ENCODE measurements at regions of chr11 and their contacts with region 1.

Region 1: DNA sequence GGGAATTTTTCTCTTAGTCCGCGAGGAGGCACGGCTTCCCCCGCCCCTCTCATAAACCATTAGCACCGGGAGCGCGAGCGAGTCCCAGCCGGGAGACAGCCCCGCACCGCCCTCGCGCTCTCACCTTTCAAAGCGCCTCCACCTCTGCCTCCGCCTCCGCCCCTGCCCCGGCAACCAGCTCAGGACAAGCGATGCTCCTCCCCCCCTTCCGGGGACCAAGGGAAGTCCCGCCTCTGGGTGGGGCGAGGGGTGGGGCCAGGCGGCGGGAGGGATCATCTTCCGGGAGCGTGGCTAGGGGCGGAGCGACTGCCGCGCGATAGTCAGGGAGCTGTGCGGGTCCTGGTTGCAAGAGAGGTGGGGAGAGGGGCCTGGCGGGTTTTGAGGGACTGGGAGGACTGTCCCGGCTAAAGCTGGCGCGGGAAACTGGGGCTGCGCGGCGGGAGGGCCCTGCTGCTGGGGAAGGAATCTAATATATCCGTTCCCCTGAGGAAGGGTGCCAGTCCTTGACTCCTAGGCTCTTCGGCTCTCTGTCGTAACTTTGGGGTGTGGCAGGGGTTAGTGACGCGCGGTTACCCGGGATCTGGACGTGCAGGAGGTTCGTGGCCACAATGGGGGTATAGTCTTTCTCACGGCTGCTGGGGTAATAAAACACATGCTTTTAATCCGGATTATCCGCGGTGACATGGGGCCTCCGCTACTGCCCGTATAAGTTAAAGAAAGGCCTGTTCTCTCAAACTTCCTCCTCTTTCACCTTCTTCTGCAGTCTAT is at the starts of genes CCDC82 and JRKL:
- DNase-seq: peak; percentile 96
- ATAC-seq: peak; percentile 99
- H3K4me3 ChIP-seq: peak within 1 kb of the TSS; percentile 77 to 89 (median 84)
- H3K4me3 Mint-ChIP-seq: peak within 1 kb of the TSS; percentile 93
- H3K27ac ChIP-seq: peak within 1 kb of the TSS; percentile 82 to 83
- H3K27ac Mint-ChIP-seq: peak within 1 kb of the TSS; percentile 95
- H3K4me1 ChIP-seq: peaks cover 13 to 18% of the 10 kb centered on the region in 2 donors
- H3K4me1 Mint-ChIP-seq: peaks cover 26% of the 10 kb centered on the region
- H3K27me3 ChIP-seq: no peaks in the 10 kb centered on the region
- H3K27me3 Mint-ChIP-seq: no peaks in the 10 kb centered on the region
- CTCF ChIP-seq: no peak
- total RNA-seq, gene CCDC82: 34.1 and 37.9 TPM in 2 replicates
- total RNA-seq, gene JRKL: 12.5 and 12.9 TPM in 2 replicates

Region 2: DNA sequence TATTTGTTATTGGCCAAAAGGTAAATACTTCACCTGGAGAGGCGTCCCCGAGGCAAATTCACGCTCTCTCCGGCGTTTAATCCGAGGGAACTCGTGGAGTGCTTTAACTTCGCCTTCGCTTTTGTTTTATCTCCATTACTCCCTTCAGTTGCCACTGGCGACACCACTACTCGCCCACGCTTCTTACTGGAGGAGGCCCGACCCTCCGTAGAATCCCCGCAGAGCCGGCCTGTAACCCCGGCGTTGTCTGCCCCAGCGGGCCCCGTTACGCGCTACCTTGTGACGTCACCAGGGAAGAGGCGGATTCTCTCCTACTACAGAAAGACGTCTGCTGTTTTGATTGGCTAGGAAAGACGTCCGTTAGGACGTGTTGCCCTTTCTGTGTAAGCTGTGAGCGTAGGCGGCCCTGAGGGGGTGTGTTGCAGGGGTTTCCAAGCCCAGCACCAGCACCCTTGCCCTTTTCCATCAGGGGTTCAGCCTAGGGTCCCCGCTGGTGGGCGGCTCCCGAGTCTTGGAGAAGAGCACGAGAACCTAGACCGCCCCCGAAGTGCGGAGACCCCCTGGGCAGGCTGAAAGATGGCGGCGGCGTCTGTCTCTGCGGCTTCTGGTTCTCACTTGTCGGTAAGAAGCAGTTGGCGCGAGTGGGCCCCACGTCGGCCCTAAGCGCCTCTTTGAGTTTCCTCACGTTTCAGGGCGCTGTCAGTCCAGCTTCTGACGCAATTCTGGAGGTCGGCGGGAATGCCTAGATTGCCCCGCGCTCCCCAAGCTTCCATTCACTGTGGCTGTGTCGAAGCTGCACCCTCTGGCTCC is 599.6 kb before region 1 on chr11 and contains the start of gene CEP57:
- CTCF ChIA-PET with region 1: interaction called, 4 read pairs
- POLR2A ChIA-PET with region 1: interaction called, 3 read pairs
- intact Hi-C with region 1: loop called (anchors 1 kb)
- DNase-seq: peak; percentile 98
- ATAC-seq: peak; percentile 63
- H3K4me3 ChIP-seq: peak within 1 kb of the TSS; percentile 73 to 99 (median 96)
- H3K4me3 Mint-ChIP-seq: peak within 1 kb of the TSS; percentile 97
- H3K27ac ChIP-seq: peak within 1 kb of the TSS; percentile 98 to 100
- H3K27ac Mint-ChIP-seq: peak within 1 kb of the TSS; percentile 99
- H3K4me1 ChIP-seq: peaks cover 20% of the 10 kb centered on the region in 2 donors
- H3K4me1 Mint-ChIP-seq: peaks cover 51% of the 10 kb centered on the region
- H3K27me3 ChIP-seq: no peaks in the 10 kb centered on the region
- H3K27me3 Mint-ChIP-seq: no peaks in the 10 kb centered on the region
- CTCF ChIP-seq: no peak
- total RNA-seq, gene CEP57: 78.1 and 82.9 TPM in 2 replicates

Region 3: GRCh38 chr11:95849087-95849825 is 540.6 kb before region 1 on chr11:
- CTCF ChIA-PET with region 1: interaction called, 37 read pairs
- POLR2A ChIA-PET with region 1: no interaction called
- intact Hi-C with region 1: no loop called
- DNase-seq: peak; percentile 29
- ATAC-seq: no peak
- H3K4me3 ChIP-seq: no peak overlapping the region
- H3K4me3 Mint-ChIP-seq: no peak overlapping the region
- H3K27ac ChIP-seq: no peak overlapping the region
- H3K27ac Mint-ChIP-seq: peak overlapping the region; percentile 21
- H3K4me1 ChIP-seq: no peaks in the 10 kb centered on the region
- H3K4me1 Mint-ChIP-seq: no peaks in the 10 kb centered on the region
- H3K27me3 ChIP-seq: no peaks in the 10 kb centered on the region
- H3K27me3 Mint-ChIP-seq: no peaks in the 10 kb centered on the region
- CTCF ChIP-seq: no peak

Region 4: GRCh38 chr11:96054870-96055705 is 334.8 kb before region 1 on chr11:
- CTCF ChIA-PET with region 1: interaction called, 33 read pairs
- POLR2A ChIA-PET with region 1: no interaction called
- intact Hi-C with region 1: loop called (anchors 1 kb)
- DNase-seq: peak; percentile 51
- ATAC-seq: peak; percentile 41
- H3K4me3 ChIP-seq: no peak overlapping the region
- H3K4me3 Mint-ChIP-seq: no peak overlapping the region
- H3K27ac ChIP-seq: no peak overlapping the region
- H3K27ac Mint-ChIP-seq: no peak overlapping the region
- H3K4me1 ChIP-seq: peaks cover 5 to 9% of the 10 kb centered on the region in 2 donors
- H3K4me1 Mint-ChIP-seq: peaks cover 20% of the 10 kb centered on the region
- H3K27me3 ChIP-seq: no peaks in the 10 kb centered on the region
- H3K27me3 Mint-ChIP-seq: no peaks in the 10 kb centered on the region
- CTCF ChIP-seq: peak; percentile 70

Region 5: GRCh38 chr11:96254087-96254486 is 135.8 kb before region 1 on chr11:
- CTCF ChIA-PET with region 1: no interaction called
- POLR2A ChIA-PET with region 1: interaction called, 3 read pairs
- intact Hi-C with region 1: loop called (anchors 5 kb)
- DNase-seq: peak; percentile 33
- ATAC-seq: no peak
- H3K4me3 ChIP-seq: peak overlapping the region; percentile 7 to 53 (median 34)
- H3K4me3 Mint-ChIP-seq: peak overlapping the region; percentile 89
- H3K27ac ChIP-seq: peak overlapping the region; percentile 95 to 99
- H3K27ac Mint-ChIP-seq: peak overlapping the region; percentile 94
- H3K4me1 ChIP-seq: peaks cover 67 to 69% of the 10 kb centered on the region in 2 donors
- H3K4me1 Mint-ChIP-seq: peaks cover 82% of the 10 kb centered on the region
- H3K27me3 ChIP-seq: no peaks in the 10 kb centered on the region
- H3K27me3 Mint-ChIP-seq: no peaks in the 10 kb centered on the region
- CTCF ChIP-seq: no peak

Region 6: GRCh38 chr11:97786961-97787360 is 1397.1 kb after region 1 on chr11:
- CTCF ChIA-PET with region 1: no interaction called
- POLR2A ChIA-PET with region 1: no interaction called
- intact Hi-C with region 1: no loop called
- DNase-seq: no peak
- ATAC-seq: no peak
- H3K4me3 ChIP-seq: no peak overlapping the region
- H3K4me3 Mint-ChIP-seq: no peak overlapping the region
- H3K27ac ChIP-seq: no peak overlapping the region
- H3K27ac Mint-ChIP-seq: no peak overlapping the region
- H3K4me1 ChIP-seq: no peaks in the 10 kb centered on the region
- H3K4me1 Mint-ChIP-seq: no peaks in the 10 kb centered on the region
- H3K27me3 ChIP-seq: no peaks in the 10 kb centered on the region
- H3K27me3 Mint-ChIP-seq: no peaks in the 10 kb centered on the region
- CTCF ChIP-seq: no peak